Naive thymus-derived CD4-positive, alpha-beta T cell (primary cell): ENCODE measurements at regions of chr19 and their contacts with region 1.

Region 1: DNA sequence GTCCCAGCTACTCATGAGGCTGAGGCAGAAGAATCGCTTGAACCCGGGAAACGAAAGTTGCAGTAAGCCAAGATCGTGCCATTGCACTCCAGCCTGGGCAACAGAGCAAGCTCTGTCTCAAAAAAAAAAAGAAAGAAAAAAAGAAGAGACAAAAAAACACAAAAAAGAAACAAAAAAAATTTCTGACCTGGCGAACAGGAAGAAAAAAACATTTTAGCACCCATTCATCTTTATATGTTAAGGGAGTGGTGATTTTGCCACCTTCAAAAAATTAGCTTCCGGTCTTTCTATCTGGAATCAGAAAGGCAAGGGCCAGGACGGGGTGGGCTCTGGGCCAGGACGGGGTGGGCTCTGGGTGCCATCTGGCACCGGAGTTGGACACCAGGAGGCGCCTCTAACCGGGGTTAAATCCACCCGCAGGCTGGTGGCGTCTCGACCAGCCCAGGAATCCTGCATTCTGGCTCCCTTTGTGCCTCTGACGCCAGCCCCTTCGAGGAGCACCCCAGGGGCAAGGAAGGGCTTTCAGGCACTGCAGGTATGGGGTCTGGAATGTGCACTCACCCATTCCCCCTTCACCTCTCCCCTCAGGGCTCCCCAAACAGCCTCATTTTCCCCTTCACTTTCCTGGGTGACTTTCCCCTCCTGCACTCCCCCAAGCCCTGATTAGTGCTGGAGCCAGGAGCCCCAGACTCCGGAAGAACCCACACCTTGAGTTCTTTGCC is 10.4 kb upstream of the ZSWIM4 start:
- DNase-seq: peak; percentile 51 to 73 (median 63)
- ATAC-seq: peak; percentile 87
- H3K4me3 ChIP-seq: no peak overlapping the region
- H3K4me3 Mint-ChIP-seq: peak overlapping the region; percentile 51 to 72 (median 68)
- H3K27ac ChIP-seq: no peak overlapping the region
- H3K27ac Mint-ChIP-seq: peak overlapping the region; percentile 58 to 90 (median 80)
- H3K4me1 ChIP-seq: peaks cover 28 to 32% of the 10 kb centered on the region in 2 donors
- H3K4me1 Mint-ChIP-seq: peaks cover 7 to 46% (median 32%) of the 10 kb centered on the region in 7 donors
- H3K27me3 ChIP-seq: no peaks in the 10 kb centered on the region
- H3K27me3 Mint-ChIP-seq: no peaks in the 10 kb centered on the region

Region 2: DNA sequence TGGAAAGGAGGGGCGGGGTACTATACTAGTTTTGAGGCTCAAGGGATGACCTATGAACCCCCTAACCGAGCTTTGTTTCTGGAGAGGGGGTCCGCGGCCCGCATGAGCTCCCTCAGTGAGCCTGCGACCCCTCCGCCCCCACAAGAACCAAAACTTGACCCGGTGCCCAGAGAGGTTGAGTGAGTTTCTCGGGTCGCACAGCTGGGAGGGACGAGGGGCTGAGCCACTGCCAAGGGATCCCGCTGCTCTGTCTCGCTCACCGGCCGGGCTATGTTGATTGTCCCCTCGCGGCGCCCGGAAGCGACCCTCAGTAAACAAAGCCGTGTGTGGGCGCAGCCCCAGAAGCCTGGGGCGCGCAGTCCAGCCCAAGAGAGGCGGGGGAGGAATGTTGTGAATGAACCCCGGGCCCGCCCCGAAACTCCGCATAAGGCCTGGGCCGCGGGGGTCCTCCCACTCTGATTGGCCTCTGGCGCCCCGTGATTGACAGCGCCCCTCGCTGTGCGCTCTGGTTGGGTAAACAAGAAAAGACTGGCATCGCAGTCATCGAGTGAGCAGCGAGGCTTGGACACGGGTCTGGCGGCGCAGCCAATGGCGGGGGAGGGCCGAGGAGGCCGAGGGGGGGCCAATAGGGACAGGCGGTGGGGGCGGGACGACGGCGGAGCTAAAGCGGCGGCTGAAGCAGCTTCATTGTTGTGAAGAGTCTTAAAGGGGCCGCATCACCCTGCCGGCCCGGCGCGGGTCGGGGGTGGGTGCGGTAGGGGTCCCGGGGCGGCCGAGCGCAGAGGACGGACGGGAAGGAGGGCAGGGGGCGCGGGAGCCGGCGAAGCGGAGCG is 10.1 kb after region 1 on chr19 and contains the start of gene ZSWIM4:
- CTCF ChIA-PET with region 1: interaction called, 8 read pairs
- POLR2A ChIA-PET with region 1: interaction called, 11 read pairs
- intact Hi-C with region 1: loop called in 1 of 2 experiments (anchors 1 kb)
- DNase-seq: peak; percentile 67 to 93 (median 77)
- ATAC-seq: peak; percentile 95
- H3K4me3 ChIP-seq: peak within 1 kb of the TSS; percentile 84
- H3K4me3 Mint-ChIP-seq: peak within 1 kb of the TSS; percentile 93 to 97 (median 94)
- H3K27ac ChIP-seq: peak within 1 kb of the TSS; percentile 56
- H3K27ac Mint-ChIP-seq: peak within 1 kb of the TSS; percentile 89 to 97 (median 95)
- H3K4me1 ChIP-seq: peaks cover 14 to 21% of the 10 kb centered on the region in 2 donors
- H3K4me1 Mint-ChIP-seq: peaks cover 22 to 46% (median 37%) of the 10 kb centered on the region in 7 donors
- H3K27me3 ChIP-seq: no peaks in the 10 kb centered on the region
- H3K27me3 Mint-ChIP-seq: no peaks in the 10 kb centered on the region
- total RNA-seq, gene ZSWIM4: 4.8 to 7.8 (median 5.9) TPM

Region 3: DNA sequence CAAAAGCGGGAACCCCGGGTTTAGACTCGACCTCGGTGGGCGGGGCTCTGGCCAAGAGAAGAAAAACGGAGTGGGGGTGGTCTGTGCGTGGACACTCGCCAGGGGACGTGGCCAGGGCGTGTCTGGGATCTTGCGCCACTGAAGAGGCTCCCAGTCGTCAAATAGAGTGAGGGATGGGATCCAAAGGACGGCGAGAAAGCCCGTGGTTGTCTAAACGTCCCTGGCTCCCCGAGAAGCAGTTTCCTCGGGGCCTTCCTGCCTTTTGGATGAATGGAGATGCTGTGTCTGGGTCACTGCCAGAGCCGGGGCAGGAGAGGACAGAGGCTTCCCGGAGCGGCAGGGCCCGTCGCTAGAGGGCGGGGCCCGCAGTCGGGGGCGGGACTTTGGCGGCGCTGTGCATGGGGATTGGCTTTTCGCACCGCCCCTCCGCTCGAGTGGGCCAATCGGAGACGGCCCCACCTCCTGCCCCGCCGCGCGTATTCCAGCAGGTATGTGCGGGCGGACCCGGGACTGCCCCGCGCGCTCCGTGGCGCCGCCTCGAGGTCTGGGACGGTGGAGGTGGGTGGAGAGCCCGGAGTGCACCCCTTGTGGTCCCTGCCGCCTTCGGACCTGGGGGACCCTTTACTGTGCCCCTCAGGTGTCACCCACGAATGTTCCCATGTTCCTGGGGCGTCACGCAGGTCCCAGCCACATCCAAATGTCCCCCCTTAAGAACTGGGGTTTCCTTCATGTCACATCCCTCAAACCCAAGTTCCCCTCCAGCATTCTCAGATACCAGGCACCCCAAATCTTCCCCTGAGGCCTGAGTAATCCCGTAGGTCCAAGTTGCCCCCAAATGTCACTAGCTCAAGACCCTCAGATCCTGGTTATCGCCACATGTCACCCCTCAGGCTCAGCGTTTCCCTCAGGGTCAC is 48.7 kb after region 1 on chr19:
- CTCF ChIA-PET with region 1: interaction called, 9 read pairs
- POLR2A ChIA-PET with region 1: interaction called, 20 read pairs
- intact Hi-C with region 1: loop called in 1 of 2 experiments (anchors 1 kb)
- DNase-seq: peak; percentile 88 to 97 (median 92)
- ATAC-seq: peak; percentile 69
- H3K4me3 ChIP-seq: peak overlapping the region; percentile 70
- H3K4me3 Mint-ChIP-seq: peak overlapping the region; percentile 79 to 93 (median 88)
- H3K27ac ChIP-seq: peak overlapping the region; percentile 85
- H3K27ac Mint-ChIP-seq: peak overlapping the region; percentile 88 to 97 (median 91)
- H3K4me1 ChIP-seq: peaks cover 31 to 41% of the 10 kb centered on the region in 2 donors
- H3K4me1 Mint-ChIP-seq: peaks cover 15 to 41% (median 36%) of the 10 kb centered on the region in 7 donors
- H3K27me3 ChIP-seq: no peaks in the 10 kb centered on the region
- H3K27me3 Mint-ChIP-seq: no peaks in the 10 kb centered on the region

Region 4: GRCh38 chr19:13872695-13873389 is 88.0 kb after region 1 on chr19:
- CTCF ChIA-PET with region 1: interaction called, 10 read pairs
- POLR2A ChIA-PET with region 1: no interaction called
- intact Hi-C with region 1: no loop called
- DNase-seq: peak in 2 of 9 donors; percentile 37 to 50
- ATAC-seq: peak; percentile 82
- H3K4me3 ChIP-seq: no peak overlapping the region
- H3K4me3 Mint-ChIP-seq: peak overlapping the region; percentile 25 to 83 (median 72)
- H3K27ac ChIP-seq: no peak overlapping the region
- H3K27ac Mint-ChIP-seq: peak overlapping the region in 3 of 9 donors; percentile 42 to 65 (median 48)
- H3K4me1 ChIP-seq: peaks cover 0 to 4% of the 10 kb centered on the region in 2 donors
- H3K4me1 Mint-ChIP-seq: peaks cover 0 to 9% (median 3%) of the 10 kb centered on the region in 7 donors
- H3K27me3 ChIP-seq: no peaks in the 10 kb centered on the region
- H3K27me3 Mint-ChIP-seq: peaks cover 7 to 27% (median 9%) of the 10 kb centered on the region in 5 donors

Region 5: GRCh38 chr19:14419106-14419813 is 634.4 kb after region 1 on chr19 and contains the start of gene DDX39A:
- CTCF ChIA-PET with region 1: no interaction called
- POLR2A ChIA-PET with region 1: no interaction called
- intact Hi-C with region 1: no loop called
- DNase-seq: peak; percentile 80 to 99 (median 98)
- ATAC-seq: peak; percentile 90
- H3K4me3 ChIP-seq: peak within 1 kb of the TSS; percentile 87
- H3K4me3 Mint-ChIP-seq: peak within 1 kb of the TSS; percentile 83 to 97 (median 92)
- H3K27ac ChIP-seq: peak within 1 kb of the TSS; percentile 92
- H3K27ac Mint-ChIP-seq: peak within 1 kb of the TSS; percentile 90 to 97 (median 95)
- H3K4me1 ChIP-seq: peaks cover 24 to 29% of the 10 kb centered on the region in 2 donors
- H3K4me1 Mint-ChIP-seq: peaks cover 23 to 49% (median 38%) of the 10 kb centered on the region in 7 donors
- H3K27me3 ChIP-seq: no peaks in the 10 kb centered on the region
- H3K27me3 Mint-ChIP-seq: peaks cover 0 to 2% (median 0%) of the 10 kb centered on the region in 5 donors
- total RNA-seq, gene DDX39A: 135 to 288 (median 215) TPM